ENCODE measurements at regions of chr1 and their contacts with region 1.

Region 1: GRCh38 chr1:12078938-12079861 is 16.1 kb downstream of the TNFRSF8 start:
- DNase-seq: peak; percentile 71
- ATAC-seq: peak; percentile 57
- H3K4me3 Mint-ChIP-seq: no peak overlapping the region
- H3K27ac Mint-ChIP-seq: no peak overlapping the region
- H3K4me1 Mint-ChIP-seq: peaks cover 57% of the 10 kb centered on the region
- H3K27me3 Mint-ChIP-seq: peaks cover 6% of the 10 kb centered on the region

Region 2: GRCh38 chr1:12052008-12052573 is 27.1 kb before region 1 on chr1:
- CTCF ChIA-PET with region 1: interaction called, 13 read pairs
- DNase-seq: peak; percentile 88
- ATAC-seq: peak; percentile 67
- H3K4me3 Mint-ChIP-seq: peak overlapping the region; percentile 23
- H3K27ac Mint-ChIP-seq: peak overlapping the region; percentile 82
- H3K4me1 Mint-ChIP-seq: peaks cover 63% of the 10 kb centered on the region
- H3K27me3 Mint-ChIP-seq: no peaks in the 10 kb centered on the region

Region 3: DNA sequence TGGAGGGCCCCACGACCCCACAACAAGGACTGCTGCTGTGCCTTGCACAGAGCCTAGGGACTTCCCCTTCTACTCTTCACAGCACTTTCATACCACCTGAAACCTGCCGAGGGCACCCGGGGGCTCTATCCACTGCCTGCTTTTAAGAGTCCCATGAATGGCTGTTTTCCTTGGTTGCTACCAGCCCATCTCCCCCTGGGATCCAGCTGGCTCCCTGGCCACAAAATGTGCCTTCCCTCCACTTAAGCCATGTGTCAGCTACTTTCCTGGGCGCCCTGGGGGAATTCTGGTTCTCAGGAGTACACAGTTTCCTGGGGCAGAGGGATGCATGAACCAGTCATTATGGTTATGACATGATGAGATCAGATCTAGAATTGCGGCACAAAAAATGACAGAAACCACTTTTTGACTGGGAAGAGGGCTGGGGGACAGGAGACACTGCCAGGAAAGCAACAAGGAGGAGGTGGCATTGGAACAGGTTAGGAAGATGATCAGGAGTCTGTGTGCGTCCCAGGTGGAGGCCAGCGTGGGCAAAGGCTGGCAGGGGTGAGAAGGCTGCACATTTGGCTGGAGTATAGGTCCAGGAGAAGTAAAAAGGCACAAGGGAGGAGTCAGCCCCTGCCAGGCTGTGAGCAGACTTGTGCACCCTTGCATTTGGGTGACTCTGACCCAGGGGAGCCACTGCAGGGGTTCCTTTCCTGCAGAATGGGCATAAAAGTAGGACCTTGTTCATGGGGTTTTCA is 19.3 kb before region 1 on chr1:
- CTCF ChIA-PET with region 1: interaction called, 12 read pairs
- DNase-seq: no peak
- ATAC-seq: no peak
- H3K4me3 Mint-ChIP-seq: peak overlapping the region; percentile 5
- H3K27ac Mint-ChIP-seq: peak overlapping the region; percentile 30
- H3K4me1 Mint-ChIP-seq: peaks cover 76% of the 10 kb centered on the region
- H3K27me3 Mint-ChIP-seq: peaks cover 23% of the 10 kb centered on the region

Measured in activated CD8-positive, alpha-beta memory T cell treated with anti-CD3 and anti-CD28 coated beads, Interleukin-2, amount 10 ng/mL, durations not matched to agents 7 days and 5 days (primary cell).